Activated CD4-positive, alpha-beta T cell treated with anti-CD3 and anti-CD28 coated beads for 36 hours (primary cell): ENCODE measurements at regions of chr13 and their contacts with region 1.

Region 1: DNA sequence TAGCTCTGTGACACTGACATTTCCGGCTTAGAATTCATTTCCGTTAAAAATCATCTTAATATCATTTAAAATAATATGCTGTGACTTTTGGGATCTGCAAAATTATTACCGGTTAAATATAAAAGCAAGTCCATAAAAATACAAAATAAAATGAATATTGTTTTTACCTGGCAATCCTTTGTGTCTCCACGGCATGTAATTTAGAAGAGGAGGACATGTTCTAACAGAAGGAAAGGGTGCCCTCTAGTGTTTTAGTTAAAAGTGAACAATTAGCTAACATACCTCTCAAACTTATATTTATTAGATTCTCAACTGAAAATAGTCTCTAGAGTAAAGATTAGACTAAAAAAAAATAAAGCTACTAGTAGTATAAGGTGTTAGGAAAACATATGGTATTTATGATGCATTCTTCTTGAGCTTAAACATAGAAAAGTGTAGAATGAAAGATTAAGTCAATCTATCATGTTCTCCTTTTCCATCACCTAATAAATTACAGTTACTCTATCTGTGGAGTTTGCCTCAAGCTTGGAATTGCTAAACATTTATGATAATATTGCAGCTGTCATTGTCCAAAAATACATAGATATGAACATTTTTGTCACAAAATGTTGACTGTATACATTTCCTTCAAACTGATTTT is 676.7 kb upstream of the SPRY2 start:
- DNase-seq: no peak
- ATAC-seq: no peak
- H3K4me3 Mint-ChIP-seq: no peak overlapping the region
- H3K27ac Mint-ChIP-seq: no peak overlapping the region
- H3K4me1 Mint-ChIP-seq: no peaks in the 10 kb centered on the region
- H3K27me3 Mint-ChIP-seq: no peaks in the 10 kb centered on the region

Region 2: GRCh38 chr13:80979035-80979641 is 38.5 kb before region 1 on chr13:
- CTCF ChIA-PET with region 1: interaction called, 16 read pairs
- POLR2A ChIA-PET with region 1: no interaction called
- intact Hi-C with region 1: loop called (anchors 1 kb)
- DNase-seq: peak; percentile 47
- ATAC-seq: peak; percentile 55
- H3K4me3 Mint-ChIP-seq: no peak overlapping the region
- H3K27ac Mint-ChIP-seq: no peak overlapping the region
- H3K4me1 Mint-ChIP-seq: no peaks in the 10 kb centered on the region
- H3K27me3 Mint-ChIP-seq: no peaks in the 10 kb centered on the region